ENCODE measurements at regions of chr6 and their contacts with region 1.

Region 1: GRCh38 chr6:44312901-44313788 is at the start of gene AARS2:
- DNase-seq: peak; percentile 68 to 99
- H3K4me3 ChIP-seq: peak within 1 kb of the TSS; percentile 66 to 91 (median 88)
- H3K27ac ChIP-seq: peak within 1 kb of the TSS; percentile 64; the same call in 1 of the 2 replicates
- H3K4me1 ChIP-seq: peaks cover 3 to 6% (median 3%) of the 10 kb centered on the region in 4 experiments
- H3K27me3 ChIP-seq: peaks cover 0 to 1% (median 0%) of the 10 kb centered on the region in 4 experiments; a peak in 1 of 7 replicates
- CTCF ChIP-seq: peak; percentile 91 to 97 (median 95)
- EP300 ChIP-seq: peak in 1 of 2 experiments; percentile 21; a peak in 1 of 3 replicates
- POLR2A ChIP-seq: peak; percentile 94 to 98
- RAD21 ChIP-seq: peak; percentile 5 to 36; a peak in 2 of 4 replicates
- total RNA-seq, gene AARS2: 19.9 and 20.4 TPM in 2 replicates

Region 2: GRCh38 chr6:44151348-44152108 is 161.6 kb before region 1 on chr6:
- CTCF ChIA-PET with region 1: no interaction called
- POLR2A ChIA-PET with region 1: no interaction called
- DNase-seq: peak; percentile 61 to 99
- H3K4me3 ChIP-seq: no peak overlapping the region
- H3K27ac ChIP-seq: no peak overlapping the region
- H3K4me1 ChIP-seq: peaks cover 0 to 10% (median 3%) of the 10 kb centered on the region in 4 experiments; a peak in 5 of 7 replicates
- H3K27me3 ChIP-seq: no peaks in the 10 kb centered on the region
- CTCF ChIP-seq: peak in 2 of 3 experiments; percentile 99 to 100; a peak in 3 of 4 replicates
- EP300 ChIP-seq: no peak
- POLR2A ChIP-seq: no peak
- RAD21 ChIP-seq: peak; percentile 71 to 82

Region 3: DNA sequence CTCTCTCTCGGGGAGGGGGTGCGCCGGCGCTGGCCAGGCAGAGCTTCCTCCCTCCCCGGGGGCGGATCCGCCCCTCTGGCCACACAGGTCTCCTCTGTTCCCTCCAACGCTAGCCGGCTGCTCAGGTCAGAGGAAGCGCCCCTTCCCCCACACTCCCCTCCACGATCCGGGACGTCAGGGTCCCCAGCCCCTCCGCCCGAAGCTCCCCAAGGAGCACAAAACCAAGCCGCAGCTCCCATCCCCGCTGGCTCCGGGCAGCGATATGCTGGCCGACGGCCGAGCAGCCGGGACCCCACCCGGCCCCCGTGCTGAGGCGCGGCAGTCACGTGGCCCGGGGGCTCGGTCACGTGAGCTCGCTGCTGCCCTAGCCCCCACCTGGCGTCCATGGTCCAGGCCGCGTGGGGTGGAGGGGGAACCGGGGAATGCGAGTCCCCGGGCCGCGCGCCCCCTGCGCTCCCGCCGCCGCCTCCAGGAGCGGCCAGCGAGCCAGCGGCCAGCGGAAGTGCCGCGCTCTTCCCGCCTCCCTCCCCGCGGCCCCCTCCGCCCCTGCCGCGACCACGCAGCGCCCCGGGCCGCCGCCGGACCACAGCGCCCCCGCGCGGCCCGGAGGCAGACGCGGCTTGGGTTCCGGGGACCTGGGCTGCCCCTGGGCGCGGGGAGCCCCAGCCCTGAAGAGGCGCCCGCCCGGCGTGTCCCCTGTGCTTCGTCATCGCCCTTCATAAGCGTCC is 56.0 kb before region 1 on chr6 and contains the start of gene SLC35B2:
- CTCF ChIA-PET with region 1: interaction called, 330 read pairs
- POLR2A ChIA-PET with region 1: interaction called, 14 read pairs
- DNase-seq: peak in 1 of 2 experiments; percentile 85
- H3K4me3 ChIP-seq: peak within 1 kb of the TSS; percentile 67 to 85 (median 75)
- H3K27ac ChIP-seq: peak within 1 kb of the TSS; percentile 88
- H3K4me1 ChIP-seq: peaks cover 1 to 20% (median 7%) of the 10 kb centered on the region in 4 experiments; a peak in 6 of 7 replicates
- H3K27me3 ChIP-seq: no peaks in the 10 kb centered on the region
- CTCF ChIP-seq: peak in 2 of 3 experiments; percentile 70 to 91; a peak in 3 of 4 replicates
- EP300 ChIP-seq: peak; percentile 21 to 23; a peak in 2 of 3 replicates
- POLR2A ChIP-seq: peak in 1 of 2 experiments; percentile 67; a peak in 1 of 3 replicates
- RAD21 ChIP-seq: peak; percentile 6 to 59; a peak in 3 of 4 replicates
- total RNA-seq, gene SLC35B2: 29.5 and 32.3 TPM in 2 replicates

Region 4: DNA sequence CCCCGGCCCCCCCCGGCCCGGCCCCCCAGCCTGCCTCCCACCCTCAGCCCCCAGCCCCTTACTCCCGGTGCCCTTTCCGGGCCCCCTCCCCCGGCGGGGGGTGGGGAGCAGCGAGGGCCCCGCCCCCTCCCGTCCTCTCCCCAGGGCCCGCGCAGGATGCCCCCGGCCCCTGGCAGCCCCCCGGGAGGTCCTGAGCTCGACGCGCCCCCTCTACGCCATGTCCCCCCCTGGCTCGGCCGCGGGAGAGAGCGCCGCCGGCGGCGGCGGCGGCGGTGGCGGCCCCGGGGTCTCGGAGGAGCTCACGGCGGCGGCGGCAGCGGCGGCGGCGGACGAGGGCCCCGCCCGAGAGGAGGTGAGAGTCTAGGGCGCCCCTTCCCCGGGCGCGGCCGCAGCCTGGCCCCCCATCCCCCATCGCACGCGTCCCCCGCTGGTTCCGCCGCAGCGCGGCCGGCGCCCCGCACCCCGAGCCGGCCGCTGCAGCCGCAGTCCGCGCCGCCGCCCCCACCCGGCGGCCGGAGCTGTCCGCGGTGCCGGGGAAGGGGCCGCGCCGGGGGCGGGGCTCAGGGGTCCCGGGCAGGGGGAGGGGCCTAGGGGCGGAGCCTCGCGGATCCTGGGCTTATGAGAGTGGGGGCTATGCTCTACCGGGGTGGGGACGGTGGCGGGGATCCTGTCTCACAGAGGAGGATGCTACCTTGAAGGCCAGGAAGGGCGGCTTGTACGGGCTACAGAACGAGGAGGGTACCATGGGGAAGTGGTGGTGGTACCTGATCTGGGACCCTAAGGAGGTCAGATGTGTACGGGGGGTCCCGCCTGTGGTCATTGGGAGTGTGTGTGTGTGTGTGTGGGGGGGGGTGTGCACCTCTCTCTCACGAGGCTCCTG is 42.4 kb before region 1 on chr6:
- CTCF ChIA-PET with region 1: interaction called, 330 read pairs
- POLR2A ChIA-PET with region 1: interaction called, 12 read pairs
- DNase-seq: peak in 1 of 2 experiments; percentile 90
- H3K4me3 ChIP-seq: peak overlapping the region; percentile 33 to 60 (median 46)
- H3K27ac ChIP-seq: no peak overlapping the region
- H3K4me1 ChIP-seq: peaks cover 12 to 33% (median 14%) of the 10 kb centered on the region in 4 experiments
- H3K27me3 ChIP-seq: peaks cover 0 to 3% (median 1%) of the 10 kb centered on the region in 4 experiments; a peak in 2 of 7 replicates
- CTCF ChIP-seq: no peak
- EP300 ChIP-seq: no peak
- POLR2A ChIP-seq: no peak
- RAD21 ChIP-seq: no peak

Region 5: DNA sequence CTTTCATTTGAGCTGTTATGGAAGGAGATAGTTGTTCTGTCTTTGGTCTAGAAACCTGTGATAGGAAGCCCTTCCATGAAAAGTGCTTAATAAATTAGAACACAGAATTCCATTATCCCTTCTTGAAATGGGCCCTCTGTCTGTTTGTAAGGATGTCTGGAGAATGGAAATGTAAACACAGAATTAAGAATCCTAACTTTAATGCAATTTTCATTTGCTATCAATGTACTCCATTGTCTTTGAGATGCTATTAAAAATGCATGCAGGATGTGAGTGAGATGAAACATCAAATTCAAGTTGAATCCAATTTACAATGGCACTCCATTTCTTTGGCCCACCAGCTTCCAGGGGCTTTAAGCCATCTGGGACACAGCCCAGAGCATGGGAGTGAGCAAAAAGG is 14.0 kb after region 1 on chr6:
- CTCF ChIA-PET with region 1: interaction called, 108 read pairs
- POLR2A ChIA-PET with region 1: interaction called, 13 read pairs
- DNase-seq: no peak
- H3K4me3 ChIP-seq: no peak overlapping the region
- H3K27ac ChIP-seq: no peak overlapping the region
- H3K4me1 ChIP-seq: peaks cover 0 to 11% (median 6%) of the 10 kb centered on the region in 4 experiments; a peak in 4 of 7 replicates
- H3K27me3 ChIP-seq: no peaks in the 10 kb centered on the region; a peak in 1 of 7 replicates
- CTCF ChIP-seq: no peak
- EP300 ChIP-seq: no peak
- POLR2A ChIP-seq: no peak
- RAD21 ChIP-seq: no peak

Region 6: GRCh38 chr6:44367681-44368080 is 54.5 kb after region 1 on chr6:
- CTCF ChIA-PET with region 1: no interaction called
- POLR2A ChIA-PET with region 1: no interaction called
- DNase-seq: no peak
- H3K4me3 ChIP-seq: no peak overlapping the region
- H3K27ac ChIP-seq: no peak overlapping the region
- H3K4me1 ChIP-seq: no peaks in the 10 kb centered on the region
- H3K27me3 ChIP-seq: no peaks in the 10 kb centered on the region
- CTCF ChIP-seq: no peak
- EP300 ChIP-seq: no peak
- POLR2A ChIP-seq: no peak
- RAD21 ChIP-seq: no peak

Region 7: DNA sequence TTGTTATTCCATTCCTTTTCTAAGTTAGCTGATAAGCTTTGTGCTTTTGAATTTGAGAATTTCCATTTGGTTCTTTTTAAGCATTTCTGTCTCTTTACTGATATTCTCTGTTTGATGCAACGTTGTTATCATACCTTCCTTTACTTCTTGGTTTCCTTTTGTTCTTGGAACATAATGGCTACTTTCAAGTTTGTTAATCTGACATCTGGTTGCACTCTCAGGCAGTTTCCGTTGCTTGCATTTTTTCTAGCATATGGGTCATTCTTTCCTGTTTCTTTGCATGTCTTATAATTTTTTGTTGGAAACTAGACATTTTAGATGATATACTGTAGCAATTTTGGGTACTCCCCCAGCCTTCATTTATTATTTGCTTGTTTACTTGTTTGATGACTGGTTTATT is 86.8 kb after region 1 on chr6:
- CTCF ChIA-PET with region 1: no interaction called
- POLR2A ChIA-PET with region 1: no interaction called
- DNase-seq: no peak
- H3K4me3 ChIP-seq: no peak overlapping the region
- H3K27ac ChIP-seq: no peak overlapping the region
- H3K4me1 ChIP-seq: no peaks in the 10 kb centered on the region
- H3K27me3 ChIP-seq: no peaks in the 10 kb centered on the region
- CTCF ChIP-seq: no peak
- EP300 ChIP-seq: no peak
- POLR2A ChIP-seq: no peak
- RAD21 ChIP-seq: no peak